BJ (cell line): ENCODE measurements at regions of chr14 and their contacts with region 1.

Region 1: GRCh38 chr14:77151918-77152588 is 10.5 kb upstream of the ZDHHC22 start:
- DNase-seq: no peak
- H3K4me3 ChIP-seq: no peak overlapping the region
- H3K27me3 ChIP-seq: peaks cover 15% of the 10 kb centered on the region
- CTCF ChIP-seq: peak; percentile 11; the same call in 1 of the 2 replicates

Region 2: DNA sequence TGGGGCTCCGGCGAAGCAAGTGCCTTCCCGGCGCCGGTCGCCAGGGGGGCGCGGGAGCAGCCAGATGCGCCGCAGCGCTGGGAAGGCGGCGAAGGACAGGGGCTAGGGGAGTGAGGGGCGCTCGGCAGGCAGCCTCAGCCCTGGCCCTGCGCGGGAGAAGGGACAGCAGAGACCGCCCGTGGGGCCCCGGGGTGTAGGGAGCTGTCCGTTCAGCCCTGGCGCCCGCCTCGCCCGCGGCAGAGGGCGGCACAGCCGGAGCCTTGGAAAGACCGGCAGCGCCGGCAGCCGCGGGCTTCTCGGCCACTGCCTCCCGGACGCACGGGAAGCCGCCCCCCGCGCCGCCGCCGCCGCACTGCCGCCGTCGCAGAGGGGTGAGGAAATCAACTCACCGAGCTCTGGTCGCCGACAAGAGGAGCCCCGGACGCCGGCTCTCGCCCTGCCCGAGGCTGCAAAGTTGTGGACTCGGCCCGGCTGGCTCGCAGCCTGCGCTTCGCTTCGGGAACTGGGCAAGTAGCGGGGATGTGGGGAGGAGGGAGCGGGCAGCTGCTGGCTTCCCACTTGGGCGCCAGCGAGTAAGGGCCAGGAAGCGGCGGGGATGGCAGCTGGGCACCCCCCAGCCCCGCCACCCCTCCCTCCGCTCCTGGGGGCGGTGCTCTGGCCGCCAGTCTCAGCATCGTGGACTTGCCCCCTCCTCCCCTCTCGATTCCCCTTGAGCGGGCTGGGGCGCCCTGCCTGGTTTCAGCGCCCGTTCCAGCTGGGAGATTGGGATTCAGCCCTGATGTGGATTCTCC is 10.6 kb before region 1 on chr14 and contains the start of gene ZDHHC22:
- CTCF ChIA-PET with region 1: interaction called, 13 read pairs
- POLR2A ChIA-PET with region 1: no interaction called
- DNase-seq: no peak
- H3K4me3 ChIP-seq: peak within 1 kb of the TSS; percentile 22
- H3K27me3 ChIP-seq: peaks cover 48% of the 10 kb centered on the region
- CTCF ChIP-seq: 0 out of 2 replicates have a peak, but pooled peaks have one; percentile 23
- polyA plus RNA-seq, gene ZDHHC22: not detected in 2 replicates

Region 3: DNA sequence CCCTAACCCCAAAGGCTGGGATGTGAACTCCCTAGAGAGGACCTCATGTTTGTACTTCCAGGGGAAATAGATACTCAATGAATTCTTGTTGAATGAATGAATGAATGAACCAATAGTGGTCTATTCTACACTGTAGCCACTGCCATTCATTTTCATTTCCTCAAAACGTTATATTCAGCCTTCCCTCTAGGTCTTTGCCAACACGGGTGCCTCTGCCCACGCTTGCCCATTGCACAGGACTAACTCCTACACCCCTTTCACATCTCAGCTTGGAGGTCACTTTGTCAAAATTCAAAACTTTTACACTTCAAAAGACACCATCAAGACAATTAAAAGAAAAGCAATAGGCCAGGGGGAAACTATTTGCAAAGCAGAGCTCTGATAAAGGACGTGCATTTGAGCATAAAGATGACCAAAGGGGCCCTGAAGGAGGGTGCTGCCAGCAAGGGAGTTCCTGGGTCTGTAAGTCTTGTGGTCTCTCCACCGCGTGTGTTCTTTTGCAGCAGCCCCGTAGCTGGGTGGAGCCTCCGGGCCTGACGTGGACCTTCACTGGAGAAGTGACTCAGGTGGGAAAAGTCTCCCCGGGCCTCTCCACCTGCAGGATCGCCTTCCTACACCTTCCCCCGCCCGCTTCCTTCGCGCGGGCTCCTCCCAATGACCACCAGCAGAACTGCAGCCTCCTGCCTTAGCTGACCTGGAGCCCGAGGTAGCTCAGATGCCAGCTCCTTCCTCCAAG is 61.1 kb after region 1 on chr14:
- CTCF ChIA-PET with region 1: interaction called, 12 read pairs
- POLR2A ChIA-PET with region 1: no interaction called
- DNase-seq: no peak
- H3K4me3 ChIP-seq: no peak overlapping the region
- H3K27me3 ChIP-seq: peaks cover 2% of the 10 kb centered on the region
- CTCF ChIP-seq: peak; percentile 64